ENCODE measurements at regions of chr2 and their contacts with region 1.

Region 1: DNA sequence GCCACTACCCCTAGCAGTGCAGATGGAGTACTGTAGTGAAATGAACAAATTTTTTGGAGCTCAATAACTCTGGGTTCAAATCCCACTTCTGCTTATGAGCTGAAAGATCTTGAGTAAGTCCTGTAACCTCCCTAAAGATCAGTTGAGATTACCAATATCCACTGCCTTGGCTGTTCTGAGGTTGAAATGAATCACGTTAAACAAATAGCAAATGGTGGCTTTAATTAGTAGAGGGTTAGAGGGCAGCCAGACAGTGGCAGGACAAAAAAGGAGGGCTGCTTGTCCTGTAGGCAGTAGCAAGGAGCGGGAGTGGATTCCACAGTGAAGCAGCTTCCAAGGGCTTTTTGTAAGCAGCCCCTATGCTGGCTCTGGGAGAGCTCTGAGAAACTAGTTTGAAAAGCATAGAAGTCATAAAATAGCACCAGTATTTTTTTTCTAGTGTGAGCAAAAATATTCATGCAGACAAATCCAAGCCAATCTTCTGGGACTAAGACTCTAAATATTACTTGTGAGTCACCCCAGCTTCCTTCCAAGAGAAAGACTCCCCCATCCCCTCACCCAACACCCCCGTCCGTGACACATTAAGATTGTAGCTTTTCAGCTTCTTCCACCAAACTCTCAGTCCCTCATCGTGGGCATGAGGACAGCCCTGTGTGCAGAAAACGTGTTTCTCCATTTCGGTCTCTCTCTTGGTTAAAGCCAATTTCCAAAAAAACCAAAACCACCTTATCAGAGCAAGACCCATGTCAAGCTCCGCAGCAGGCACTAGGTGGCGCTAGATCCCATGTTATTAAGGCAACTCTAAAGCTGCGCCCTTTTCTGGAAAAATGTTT is 123.5 kb upstream of the LGALSL start:
- DNase-seq: peak; percentile 89
- H3K4me3 Mint-ChIP-seq: no peak overlapping the region
- H3K27ac Mint-ChIP-seq: no peak overlapping the region
- H3K4me1 Mint-ChIP-seq: peaks cover 41% of the 10 kb centered on the region
- H3K27me3 Mint-ChIP-seq: no peaks in the 10 kb centered on the region

Region 2: DNA sequence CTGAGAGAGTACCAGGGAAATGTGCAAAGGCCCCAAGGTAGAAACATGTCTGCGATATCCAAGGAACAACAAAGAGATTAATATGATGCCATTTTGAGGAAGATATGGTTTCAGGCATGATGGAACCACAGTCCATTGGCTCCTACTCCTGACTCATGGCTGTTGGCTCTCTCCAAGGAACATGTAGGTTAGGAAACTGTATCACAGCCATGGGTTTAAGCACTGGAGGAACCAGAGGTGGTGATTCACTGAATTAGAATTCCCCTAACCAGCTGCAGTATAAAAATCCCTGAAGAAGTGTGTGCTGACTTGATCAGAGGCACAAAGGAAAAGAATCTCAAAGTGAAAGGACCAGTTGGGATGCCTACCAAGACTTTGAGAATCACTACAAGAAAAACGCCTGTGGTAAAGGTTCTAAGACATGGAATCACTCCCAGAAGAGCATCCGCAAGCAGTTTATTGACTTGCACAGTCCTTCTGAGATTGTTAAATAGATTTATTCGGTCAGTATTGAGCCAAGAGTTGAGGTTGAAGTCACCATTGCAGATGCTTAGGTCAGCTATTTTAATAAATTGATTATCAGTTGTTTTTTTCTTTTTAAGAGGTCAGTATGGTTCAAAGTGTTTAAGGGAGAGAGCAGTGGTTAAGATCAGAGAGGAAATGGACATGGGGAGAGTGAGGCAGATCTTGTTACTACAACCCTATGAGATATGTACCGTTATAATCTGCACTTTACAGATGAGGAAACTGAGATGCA is 1390.6 kb before region 1 on chr2:
- CTCF ChIA-PET with region 1: no interaction called
- intact Hi-C with region 1: no loop called
- DNase-seq: no peak
- H3K4me3 Mint-ChIP-seq: no peak overlapping the region
- H3K27ac Mint-ChIP-seq: no peak overlapping the region
- H3K4me1 Mint-ChIP-seq: no peaks in the 10 kb centered on the region
- H3K27me3 Mint-ChIP-seq: no peaks in the 10 kb centered on the region

Region 3: GRCh38 chr2:63588385-63589147 is 741.9 kb before region 1 on chr2 and contains the starts of genes MDH1 and WDPCP:
- CTCF ChIA-PET with region 1: no interaction called
- intact Hi-C with region 1: loop called (anchors 2 kb)
- DNase-seq: peak; percentile 95
- H3K4me3 Mint-ChIP-seq: peak within 1 kb of the TSS; percentile 99
- H3K27ac Mint-ChIP-seq: peak within 1 kb of the TSS; percentile 94
- H3K4me1 Mint-ChIP-seq: peaks cover 31% of the 10 kb centered on the region
- H3K27me3 Mint-ChIP-seq: no peaks in the 10 kb centered on the region
- total RNA-seq, gene MDH1: 269 to 275 TPM
- total RNA-seq, gene WDPCP: 5.6 to 5.7 TPM

Region 4: DNA sequence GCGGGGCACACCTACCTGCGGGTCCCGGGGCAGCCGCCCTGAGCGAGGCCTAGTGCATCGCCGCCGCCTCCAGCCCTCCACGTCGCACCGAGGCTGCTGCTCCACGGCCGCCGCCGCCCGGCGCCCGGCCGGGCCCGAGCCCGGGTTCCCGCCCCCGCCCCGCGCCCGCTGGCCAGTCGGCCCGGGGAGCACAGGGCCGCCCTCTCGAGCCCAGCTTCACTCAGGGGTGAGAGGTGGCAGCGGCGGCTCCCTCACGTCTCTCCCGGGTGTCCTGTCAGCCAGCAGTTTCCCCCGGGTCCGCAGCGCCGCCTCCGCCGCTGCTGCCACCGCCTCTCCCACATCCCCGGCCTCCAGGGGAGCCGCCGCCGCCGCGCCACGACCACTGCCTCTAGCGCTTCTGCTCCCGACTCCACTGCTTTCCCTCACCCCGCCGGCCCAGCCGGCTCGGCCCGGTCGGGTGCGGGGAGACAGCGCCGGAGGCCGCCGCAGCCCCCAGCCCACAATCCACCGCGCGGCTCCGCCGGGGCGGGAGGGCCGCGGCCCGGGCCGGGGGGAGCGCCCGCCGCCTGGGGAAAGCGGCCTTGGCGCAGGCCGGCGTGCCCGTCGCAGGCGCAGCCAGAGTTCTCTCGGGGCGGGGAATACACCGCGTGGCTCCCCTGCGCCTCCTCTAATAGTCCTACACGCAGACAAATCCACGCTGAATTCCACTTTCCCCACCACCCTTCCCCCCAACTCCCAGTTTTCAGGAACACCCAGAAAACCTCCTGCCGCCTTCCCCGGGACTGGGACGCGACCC is 311.4 kb before region 1 on chr2 and contains the start of gene VPS54:
- CTCF ChIA-PET with region 1: interaction called, 13 read pairs
- intact Hi-C with region 1: no loop called
- DNase-seq: peak; percentile 52
- H3K4me3 Mint-ChIP-seq: peak within 1 kb of the TSS; percentile 95
- H3K27ac Mint-ChIP-seq: peak within 1 kb of the TSS; percentile 95
- H3K4me1 Mint-ChIP-seq: peaks cover 34% of the 10 kb centered on the region
- H3K27me3 Mint-ChIP-seq: no peaks in the 10 kb centered on the region
- total RNA-seq, gene VPS54: 7.0 to 7.7 TPM

Region 5: GRCh38 chr2:64114063-64114911 is 216.2 kb before region 1 on chr2:
- CTCF ChIA-PET with region 1: interaction called, 8 read pairs
- intact Hi-C with region 1: loop called (anchors 1 kb)
- DNase-seq: no peak
- H3K4me3 Mint-ChIP-seq: no peak overlapping the region
- H3K27ac Mint-ChIP-seq: peak overlapping the region; percentile 1
- H3K4me1 Mint-ChIP-seq: peaks cover 80% of the 10 kb centered on the region
- H3K27me3 Mint-ChIP-seq: no peaks in the 10 kb centered on the region

Region 6: GRCh38 chr2:64228126-64228678 is 102.3 kb before region 1 on chr2:
- CTCF ChIA-PET with region 1: interaction called, 18 read pairs
- intact Hi-C with region 1: loop called (anchors 1 kb)
- DNase-seq: peak; percentile 76
- H3K4me3 Mint-ChIP-seq: peak overlapping the region; percentile 92
- H3K27ac Mint-ChIP-seq: peak overlapping the region; percentile 89
- H3K4me1 Mint-ChIP-seq: peaks cover 31% of the 10 kb centered on the region
- H3K27me3 Mint-ChIP-seq: no peaks in the 10 kb centered on the region

Region 7: DNA sequence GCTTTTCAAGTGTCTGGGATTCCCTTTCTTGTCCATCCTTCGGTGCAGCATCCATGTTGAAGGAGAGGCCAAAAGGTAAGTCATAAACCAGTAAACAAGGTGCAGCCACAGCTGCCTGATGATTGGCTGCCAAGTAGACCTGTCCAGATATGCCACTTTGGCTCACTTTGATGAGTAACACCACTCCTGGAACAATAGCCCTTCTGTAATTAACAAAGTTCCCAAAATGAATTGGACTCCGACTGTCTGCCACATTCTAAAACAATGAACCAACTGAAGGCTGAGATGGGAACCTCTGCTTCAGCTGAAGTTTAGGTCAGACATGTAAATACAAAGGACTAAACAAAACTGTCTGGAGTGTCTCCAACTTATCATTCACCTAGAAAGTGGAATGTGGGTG is 41.2 kb after region 1 on chr2:
- CTCF ChIA-PET with region 1: interaction called, 12 read pairs
- intact Hi-C with region 1: no loop called
- DNase-seq: no peak
- H3K4me3 Mint-ChIP-seq: no peak overlapping the region
- H3K27ac Mint-ChIP-seq: no peak overlapping the region
- H3K4me1 Mint-ChIP-seq: no peaks in the 10 kb centered on the region
- H3K27me3 Mint-ChIP-seq: no peaks in the 10 kb centered on the region

Region 8: GRCh38 chr2:64698668-64699444 is 368.4 kb after region 1 on chr2:
- CTCF ChIA-PET with region 1: no interaction called
- intact Hi-C with region 1: loop called (anchors 1 kb)
- DNase-seq: no peak
- H3K4me3 Mint-ChIP-seq: peak overlapping the region; percentile 8
- H3K27ac Mint-ChIP-seq: peak overlapping the region; percentile 68
- H3K4me1 Mint-ChIP-seq: peaks cover 47% of the 10 kb centered on the region
- H3K27me3 Mint-ChIP-seq: no peaks in the 10 kb centered on the region